Common myeloid progenitor, CD34-positive (primary cell): ENCODE measurements at regions of chr5 and their contacts with region 1.

Region 1: GRCh38 chr5:66828548-66829357 is 232.6 kb downstream of the MAST4 start:
- DNase-seq: peak; percentile 45 to 83 (median 75)
- H3K4me3 ChIP-seq: peak overlapping the region in 6 of 7 experiments; percentile 51 to 74 (median 67)
- H3K27ac ChIP-seq: no peak overlapping the region
- H3K4me1 ChIP-seq: peaks cover 3 to 16% (median 12%) of the 10 kb centered on the region in 4 experiments
- H3K27me3 ChIP-seq: peaks cover 0 to 27% (median 6%) of the 10 kb centered on the region in 5 experiments

Region 2: DNA sequence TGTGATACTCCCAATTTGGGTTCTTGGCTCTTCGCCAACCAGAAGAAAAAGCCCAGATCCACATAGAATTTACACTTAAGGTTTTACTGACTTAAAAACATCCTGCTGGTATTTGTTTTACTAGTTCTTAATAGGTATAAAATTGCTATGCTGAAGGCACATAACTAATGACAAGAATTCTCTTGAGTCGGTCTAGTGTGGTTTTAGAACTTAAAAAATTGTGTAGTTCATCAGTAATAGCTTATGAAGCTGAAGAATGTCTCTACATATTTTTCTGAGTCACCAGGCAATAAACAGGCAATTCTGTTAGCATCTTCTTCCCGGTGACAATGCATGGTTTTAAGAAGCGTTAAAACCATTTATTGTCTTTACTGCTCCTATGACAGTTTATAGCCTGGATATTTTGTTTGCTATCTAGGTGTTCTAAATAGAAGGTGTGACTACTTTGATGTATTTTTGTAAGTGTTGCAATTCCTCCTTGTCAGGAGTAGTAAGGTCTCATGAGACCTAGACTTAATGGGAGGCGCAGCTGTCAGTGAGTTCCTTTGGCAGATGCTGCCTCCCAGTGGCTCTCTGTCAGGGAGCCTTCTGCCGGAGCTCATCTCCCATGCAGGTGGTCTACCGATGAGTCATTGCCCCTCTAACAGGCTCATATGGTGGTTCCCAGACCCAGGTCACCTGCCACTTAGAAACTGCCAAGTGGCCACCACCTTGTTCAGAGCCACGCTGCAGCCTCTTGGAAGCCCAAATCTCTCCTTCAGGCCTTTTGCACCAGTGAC is 58.7 kb before region 1 on chr5:
- CTCF ChIA-PET with region 1: no interaction called
- POLR2A ChIA-PET with region 1: no interaction called
- DNase-seq: peak in 2 of 3 donors; percentile 10 to 20
- H3K4me3 ChIP-seq: no peak overlapping the region
- H3K27ac ChIP-seq: no peak overlapping the region
- H3K4me1 ChIP-seq: no peaks in the 10 kb centered on the region
- H3K27me3 ChIP-seq: no peaks in the 10 kb centered on the region

Region 3: GRCh38 chr5:66814146-66814991 is 14.4 kb before region 1 on chr5:
- CTCF ChIA-PET with region 1: interaction called, 13 read pairs
- POLR2A ChIA-PET with region 1: no interaction called
- DNase-seq: peak; percentile 52 to 68 (median 58)
- H3K4me3 ChIP-seq: no peak overlapping the region
- H3K27ac ChIP-seq: no peak overlapping the region
- H3K4me1 ChIP-seq: peaks cover 0 to 6% (median 3%) of the 10 kb centered on the region in 4 experiments
- H3K27me3 ChIP-seq: peaks cover 0 to 5% (median 0%) of the 10 kb centered on the region in 5 experiments

Region 4: DNA sequence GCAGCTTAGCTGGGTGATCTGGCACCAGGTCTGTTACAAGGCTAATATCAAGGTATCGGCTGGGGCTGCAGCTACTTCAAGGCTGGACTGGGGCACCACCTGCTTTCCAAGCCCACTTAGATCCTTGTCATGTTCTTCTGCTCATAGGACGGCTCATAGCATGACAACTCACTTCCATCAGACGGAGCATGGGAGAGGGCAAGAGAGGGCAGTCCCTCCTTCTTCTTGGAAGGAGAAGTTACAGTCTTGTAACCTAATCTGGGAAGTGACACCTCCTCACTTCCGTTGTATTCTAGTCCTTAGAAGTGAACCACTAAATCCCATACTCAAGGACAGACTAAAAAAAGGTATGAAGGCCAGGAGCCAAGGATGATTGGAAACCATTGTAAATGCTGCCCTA is 25.7 kb after region 1 on chr5:
- CTCF ChIA-PET with region 1: no interaction called
- POLR2A ChIA-PET with region 1: no interaction called
- DNase-seq: no peak
- H3K4me3 ChIP-seq: no peak overlapping the region
- H3K27ac ChIP-seq: no peak overlapping the region
- H3K4me1 ChIP-seq: peaks cover 4 to 11% (median 8%) of the 10 kb centered on the region in 4 experiments
- H3K27me3 ChIP-seq: peaks cover 0 to 4% (median 0%) of the 10 kb centered on the region in 5 experiments